ENCODE measurements at regions of chr12 and their contacts with region 1.

Region 1: DNA sequence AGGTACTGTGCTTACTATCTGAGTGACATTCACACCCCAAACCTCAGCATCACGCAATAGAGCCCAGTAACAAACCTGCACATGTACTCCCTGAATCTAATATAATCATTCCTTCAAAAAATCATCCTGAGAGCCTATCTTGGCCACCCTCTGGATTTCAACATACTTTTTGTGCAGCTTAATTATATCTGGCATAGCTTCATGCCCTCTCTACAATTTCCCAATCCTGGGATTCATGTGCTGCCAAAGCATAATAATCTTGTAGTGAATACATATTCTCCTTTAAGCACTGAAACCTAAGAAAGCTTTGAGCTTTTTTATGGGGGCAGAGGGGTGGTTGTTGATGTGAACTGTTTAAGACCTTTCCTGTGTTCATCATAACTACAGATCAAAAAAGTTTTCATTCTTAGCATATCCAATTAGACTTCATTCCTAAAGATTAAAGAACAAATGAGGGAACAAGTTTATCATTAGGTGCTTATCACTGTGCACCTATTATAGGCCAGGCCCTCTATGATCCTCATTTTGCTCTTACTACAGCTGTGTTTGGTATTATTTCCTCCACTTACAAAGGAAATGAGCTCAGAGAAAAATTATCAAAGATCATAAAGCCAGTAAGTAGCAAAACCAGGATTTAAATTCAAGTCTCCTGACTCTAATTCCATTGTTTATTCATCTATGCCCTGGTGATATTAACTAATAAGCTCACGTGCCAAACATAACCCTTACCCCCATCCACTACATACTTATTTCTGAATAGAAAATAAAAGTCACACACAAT is 51.2 kb downstream of the SINHCAF start:
- DNase-seq: no peak
- ATAC-seq: no peak
- H3K4me3 ChIP-seq: no peak overlapping the region
- H3K27ac ChIP-seq: no peak overlapping the region
- H3K4me1 ChIP-seq: no peaks in the 10 kb centered on the region
- H3K27me3 ChIP-seq: no peaks in the 10 kb centered on the region
- CTCF ChIP-seq: no peak
- POLR2A ChIP-seq: no peak
- RAD21 ChIP-seq: no peak

Region 2: GRCh38 chr12:31205054-31205453 is 69.7 kb before region 1 on chr12:
- CTCF ChIA-PET with region 1: no interaction called
- POLR2A ChIA-PET with region 1: no interaction called
- dilution Hi-C with region 1: no loop called
- in situ Hi-C with region 1: no loop called
- intact Hi-C with region 1: no loop called
- DNase-seq: peak; percentile 49
- ATAC-seq: no peak
- H3K4me3 ChIP-seq: no peak overlapping the region
- H3K27ac ChIP-seq: no peak overlapping the region
- H3K4me1 ChIP-seq: no peaks in the 10 kb centered on the region
- H3K27me3 ChIP-seq: peaks cover 2% of the 10 kb centered on the region
- CTCF ChIP-seq: no peak
- POLR2A ChIP-seq: no peak
- RAD21 ChIP-seq: no peak

Region 3: DNA sequence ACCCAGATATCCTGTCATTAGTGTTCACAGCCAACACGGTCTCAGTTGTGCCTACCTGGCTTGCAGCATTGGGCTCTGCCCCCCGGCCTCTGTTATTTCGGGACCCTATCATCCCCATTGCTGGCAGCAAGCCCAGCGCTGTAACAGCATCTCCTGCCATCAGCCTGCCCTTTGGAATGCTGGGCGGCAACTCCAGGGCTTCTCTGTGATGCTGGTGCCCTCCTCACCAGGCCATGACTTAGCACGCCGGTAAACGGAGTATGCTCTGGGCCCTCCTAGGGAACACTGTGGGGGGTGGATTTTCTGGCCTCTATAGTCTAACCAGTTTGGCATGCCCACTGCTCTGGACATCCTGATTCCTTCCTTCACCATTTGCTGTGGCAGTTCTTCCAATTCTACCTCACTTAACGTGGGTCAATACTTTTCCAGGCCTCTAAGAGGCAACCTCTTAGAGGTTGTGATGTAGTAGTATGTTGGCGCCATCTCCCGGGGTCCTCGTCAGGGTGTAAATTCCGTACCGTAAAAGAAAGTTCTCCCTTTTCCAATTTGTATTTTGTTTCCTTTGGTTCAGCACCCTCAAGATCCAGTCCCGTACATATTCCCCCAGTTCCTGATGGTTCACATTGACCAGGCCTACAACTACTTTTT is 28.8 kb before region 1 on chr12:
- CTCF ChIA-PET with region 1: interaction called, 11 read pairs
- POLR2A ChIA-PET with region 1: no interaction called
- dilution Hi-C with region 1: no loop called
- in situ Hi-C with region 1: no loop called
- intact Hi-C with region 1: no loop called
- DNase-seq: no peak
- ATAC-seq: no peak
- H3K4me3 ChIP-seq: no peak overlapping the region
- H3K27ac ChIP-seq: no peak overlapping the region
- H3K4me1 ChIP-seq: no peaks in the 10 kb centered on the region
- H3K27me3 ChIP-seq: peaks cover 20% of the 10 kb centered on the region
- CTCF ChIP-seq: peak; percentile 13; the same call in 1 of the 2 replicates
- POLR2A ChIP-seq: no peak
- RAD21 ChIP-seq: no peak

Region 4: GRCh38 chr12:31259136-31259886 is 15.4 kb before region 1 on chr12:
- CTCF ChIA-PET with region 1: interaction called, 18 read pairs
- POLR2A ChIA-PET with region 1: no interaction called
- dilution Hi-C with region 1: no loop called
- in situ Hi-C with region 1: no loop called
- intact Hi-C with region 1: no loop called
- DNase-seq: no peak
- ATAC-seq: no peak
- H3K4me3 ChIP-seq: no peak overlapping the region
- H3K27ac ChIP-seq: no peak overlapping the region
- H3K4me1 ChIP-seq: no peaks in the 10 kb centered on the region
- H3K27me3 ChIP-seq: peaks cover under 1% of the 10 kb centered on the region
- CTCF ChIP-seq: no peak
- POLR2A ChIP-seq: no peak
- RAD21 ChIP-seq: no peak

Region 5: GRCh38 chr12:31297572-31298512 is 23.1 kb after region 1 on chr12:
- CTCF ChIA-PET with region 1: interaction called, 10 read pairs
- POLR2A ChIA-PET with region 1: no interaction called
- dilution Hi-C with region 1: no loop called
- in situ Hi-C with region 1: no loop called
- intact Hi-C with region 1: no loop called
- DNase-seq: no peak
- ATAC-seq: no peak
- H3K4me3 ChIP-seq: no peak overlapping the region
- H3K27ac ChIP-seq: no peak overlapping the region
- H3K4me1 ChIP-seq: peaks cover 6% of the 10 kb centered on the region
- H3K27me3 ChIP-seq: no peaks in the 10 kb centered on the region
- CTCF ChIP-seq: no peak
- POLR2A ChIP-seq: no peak
- RAD21 ChIP-seq: no peak

Region 6: GRCh38 chr12:31325877-31326631 is 51.3 kb after region 1 on chr12 and contains the start of gene SINHCAF:
- CTCF ChIA-PET with region 1: no interaction called
- POLR2A ChIA-PET with region 1: no interaction called
- dilution Hi-C with region 1: no loop called
- in situ Hi-C with region 1: no loop called
- intact Hi-C with region 1: loop called (anchors 2 kb)
- DNase-seq: peak; percentile 96
- ATAC-seq: peak; percentile 71
- H3K4me3 ChIP-seq: peak within 1 kb of the TSS; percentile 71
- H3K27ac ChIP-seq: peak within 1 kb of the TSS; percentile 79
- H3K4me1 ChIP-seq: no peaks in the 10 kb centered on the region; the same call in 1 of the 2 replicates
- H3K27me3 ChIP-seq: no peaks in the 10 kb centered on the region
- CTCF ChIP-seq: no peak
- POLR2A ChIP-seq: peak; percentile 79; the same call in 1 of the 2 replicates
- RAD21 ChIP-seq: no peak
- total RNA-seq, gene SINHCAF: 30.8 and 43.3 TPM in 2 replicates

Measured in IMR-90 (cell line).